Activated CD4-positive, alpha-beta T cell treated with anti-CD3 and anti-CD28 coated beads for 36 hours (primary cell): ENCODE measurements at regions of chr6 and their contacts with region 1.

Region 1: GRCh38 chr6:4018172-4018905 is 60.6 kb downstream of the FAM217A start:
- DNase-seq: peak; percentile 99
- ATAC-seq: peak; percentile 65
- H3K4me3 Mint-ChIP-seq: peak overlapping the region; percentile 95
- H3K27ac Mint-ChIP-seq: peak overlapping the region; percentile 99
- H3K4me1 Mint-ChIP-seq: peaks cover 53% of the 10 kb centered on the region
- H3K27me3 Mint-ChIP-seq: no peaks in the 10 kb centered on the region

Region 2: GRCh38 chr6:3118353-3119039 is 899.8 kb before region 1 on chr6 and contains the start of gene BPHL:
- CTCF ChIA-PET with region 1: no interaction called
- POLR2A ChIA-PET with region 1: no interaction called
- intact Hi-C with region 1: loop called in 1 of 2 experiments (anchors 1 kb)
- DNase-seq: peak; percentile 100
- ATAC-seq: peak; percentile 90
- H3K4me3 Mint-ChIP-seq: peak within 1 kb of the TSS; percentile 76
- H3K27ac Mint-ChIP-seq: peak within 1 kb of the TSS; percentile 60
- H3K4me1 Mint-ChIP-seq: peaks cover 22% of the 10 kb centered on the region
- H3K27me3 Mint-ChIP-seq: no peaks in the 10 kb centered on the region
- total RNA-seq, gene BPHL: 15.8 to 16.7 TPM

Region 3: GRCh38 chr6:3258720-3259490 is 759.4 kb before region 1 on chr6 and contains the start of gene PSMG4:
- CTCF ChIA-PET with region 1: no interaction called
- POLR2A ChIA-PET with region 1: no interaction called
- intact Hi-C with region 1: loop called in 1 of 2 experiments (anchors 1 kb)
- DNase-seq: peak; percentile 97
- ATAC-seq: peak; percentile 83
- H3K4me3 Mint-ChIP-seq: peak within 1 kb of the TSS; percentile 89
- H3K27ac Mint-ChIP-seq: peak within 1 kb of the TSS; percentile 92
- H3K4me1 Mint-ChIP-seq: peaks cover 35% of the 10 kb centered on the region
- H3K27me3 Mint-ChIP-seq: peaks cover 3% of the 10 kb centered on the region
- total RNA-seq, gene PSMG4: 22.2 to 23.2 TPM

Region 4: DNA sequence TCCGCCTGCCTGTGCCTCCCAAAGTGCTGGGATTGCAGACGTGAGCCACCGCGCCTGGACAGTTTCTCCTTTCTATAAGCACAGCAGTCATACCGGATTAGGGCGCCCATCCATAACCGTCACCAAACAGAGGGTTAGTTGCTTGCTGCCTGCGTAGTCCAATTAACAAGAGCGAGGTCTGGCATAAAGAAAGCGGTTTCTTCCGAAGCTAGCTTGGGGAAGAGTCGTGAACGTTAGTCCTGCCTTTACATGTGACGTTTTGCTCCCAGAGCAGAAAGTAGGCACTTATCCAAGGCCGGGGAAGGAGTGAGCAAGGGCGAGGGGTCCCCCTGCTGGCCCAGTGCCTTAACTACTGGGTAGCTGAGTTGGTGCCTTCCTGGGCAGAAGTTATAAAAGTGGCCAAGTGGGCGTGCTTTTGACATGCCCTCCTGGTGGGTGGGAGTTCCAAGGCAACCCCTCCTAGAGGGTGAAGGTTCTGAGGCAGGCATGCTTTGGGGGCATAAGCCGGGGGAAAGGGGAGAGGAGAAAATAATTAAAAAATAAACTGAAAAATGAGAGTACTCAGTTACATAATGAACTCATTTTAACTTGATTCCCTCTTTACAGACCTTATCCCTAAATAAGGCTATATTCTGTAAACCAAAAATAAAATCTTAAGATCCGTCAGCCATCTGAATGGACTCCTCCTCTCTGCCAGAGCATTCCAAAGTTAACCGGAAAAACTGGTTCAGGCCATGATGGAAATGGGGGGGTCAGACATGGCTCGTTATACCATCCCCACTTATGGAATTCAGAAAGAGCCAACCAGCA is 27.4 kb before region 1 on chr6:
- CTCF ChIA-PET with region 1: interaction called, 13 read pairs
- POLR2A ChIA-PET with region 1: no interaction called
- intact Hi-C with region 1: no loop called
- DNase-seq: peak; percentile 86
- ATAC-seq: peak; percentile 100
- H3K4me3 Mint-ChIP-seq: no peak overlapping the region
- H3K27ac Mint-ChIP-seq: peak overlapping the region; percentile 7
- H3K4me1 Mint-ChIP-seq: peaks cover 10% of the 10 kb centered on the region
- H3K27me3 Mint-ChIP-seq: no peaks in the 10 kb centered on the region

Region 5: GRCh38 chr6:4135665-4136353 is 117.5 kb after region 1 on chr6:
- CTCF ChIA-PET with region 1: interaction called, 4 read pairs
- POLR2A ChIA-PET with region 1: interaction called, 10 read pairs
- intact Hi-C with region 1: loop called (anchors 1 kb)
- DNase-seq: peak; percentile 98
- ATAC-seq: peak; percentile 92
- H3K4me3 Mint-ChIP-seq: peak overlapping the region; percentile 79
- H3K27ac Mint-ChIP-seq: peak overlapping the region; percentile 85
- H3K4me1 Mint-ChIP-seq: peaks cover 46% of the 10 kb centered on the region
- H3K27me3 Mint-ChIP-seq: no peaks in the 10 kb centered on the region

Region 6: DNA sequence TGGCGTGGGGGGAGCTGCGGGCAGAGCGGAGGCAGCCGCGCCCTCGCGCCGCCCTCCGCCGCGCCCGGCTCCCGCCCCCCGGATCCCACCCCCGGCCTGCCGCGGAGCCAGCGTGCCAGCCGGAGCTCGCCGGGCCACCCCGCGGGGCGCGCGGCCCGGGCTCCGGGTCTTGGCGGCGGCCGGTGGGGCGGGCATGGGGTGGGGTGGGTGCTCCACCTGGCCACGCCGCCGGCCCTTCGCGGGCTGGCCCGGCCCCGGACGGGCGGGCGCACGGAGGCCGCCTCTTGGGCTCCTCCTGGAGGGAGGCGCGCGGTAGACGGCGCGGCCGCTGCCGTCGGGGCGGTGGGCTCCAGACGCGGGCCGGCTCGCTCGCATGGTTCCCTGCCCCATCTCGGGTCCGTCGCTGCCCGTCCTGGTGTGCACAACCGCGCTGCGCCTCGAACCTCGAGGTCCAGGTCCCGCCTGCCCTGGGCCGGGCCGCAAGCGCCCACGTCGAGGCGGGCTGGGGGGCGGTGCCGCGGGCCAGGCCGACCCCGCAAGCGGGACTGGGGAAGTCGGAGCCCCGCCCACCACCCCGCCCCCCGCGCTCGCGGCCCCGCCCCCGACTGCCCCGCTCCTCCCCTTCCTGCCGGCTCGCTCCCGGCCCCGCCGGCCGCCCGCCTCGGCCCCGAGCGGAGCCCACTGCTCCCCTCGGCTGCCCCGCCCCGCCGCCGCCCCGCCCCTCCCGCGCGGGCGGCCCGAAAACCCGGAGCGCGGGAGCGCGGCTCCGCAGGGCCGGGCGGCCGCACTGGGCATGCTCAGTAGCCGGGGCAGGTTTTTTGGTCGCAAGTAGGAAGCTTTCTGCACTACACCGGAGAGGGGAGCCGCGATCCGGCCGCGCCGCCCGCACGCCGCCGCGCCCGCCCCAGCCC is 757.5 kb after region 1 on chr6 and contains the start of gene CDYL:
- CTCF ChIA-PET with region 1: interaction called, 3 read pairs
- POLR2A ChIA-PET with region 1: no interaction called
- intact Hi-C with region 1: loop called in 1 of 2 experiments (anchors 2 kb)
- DNase-seq: peak; percentile 93
- ATAC-seq: peak; percentile 79
- H3K4me3 Mint-ChIP-seq: peak within 1 kb of the TSS; percentile 81
- H3K27ac Mint-ChIP-seq: peak within 1 kb of the TSS; percentile 92
- H3K4me1 Mint-ChIP-seq: peaks cover 54% of the 10 kb centered on the region
- H3K27me3 Mint-ChIP-seq: peaks cover 11% of the 10 kb centered on the region
- total RNA-seq, gene CDYL: 22.1 to 33.7 TPM

Region 7: GRCh38 chr6:5260661-5261544 is 1242.6 kb after region 1 on chr6 and contains the starts of genes FARS2 and LYRM4:
- CTCF ChIA-PET with region 1: no interaction called
- POLR2A ChIA-PET with region 1: no interaction called
- intact Hi-C with region 1: loop called in 1 of 2 experiments (anchors 1 kb)
- DNase-seq: peak; percentile 94
- ATAC-seq: peak; percentile 80
- H3K4me3 Mint-ChIP-seq: peak within 1 kb of the TSS; percentile 92
- H3K27ac Mint-ChIP-seq: peak within 1 kb of the TSS; percentile 97
- H3K4me1 Mint-ChIP-seq: peaks cover 36% of the 10 kb centered on the region
- H3K27me3 Mint-ChIP-seq: no peaks in the 10 kb centered on the region
- total RNA-seq, gene FARS2: 17.6 to 18.4 TPM
- total RNA-seq, gene LYRM4: 46.4 to 53.4 TPM